ENCODE measurements at regions of chr17 and their contacts with region 1.

Region 1: GRCh38 chr17:74859459-74860228 is at the start of gene GRIN2C:
- DNase-seq: no peak
- H3K4me3 ChIP-seq: peak within 1 kb of the TSS in 3 of 4 donors; percentile 22 to 35 (median 31)
- H3K27ac ChIP-seq: no peak within 1 kb of the TSS
- H3K4me1 ChIP-seq: peaks cover 0 to 31% (median 27%) of the 10 kb centered on the region in 4 donors
- H3K27me3 ChIP-seq: peaks cover 37 to 82% (median 65%) of the 10 kb centered on the region in 3 donors
- CTCF ChIP-seq: peak in 2 of 4 experiments; percentile 11 to 16
- EP300 ChIP-seq: no peak
- POLR2A ChIP-seq: no peak
- total RNA-seq, gene GRIN2C: 0.49 TPM in 1 of 4 donors, not detected in the others

Region 2: DNA sequence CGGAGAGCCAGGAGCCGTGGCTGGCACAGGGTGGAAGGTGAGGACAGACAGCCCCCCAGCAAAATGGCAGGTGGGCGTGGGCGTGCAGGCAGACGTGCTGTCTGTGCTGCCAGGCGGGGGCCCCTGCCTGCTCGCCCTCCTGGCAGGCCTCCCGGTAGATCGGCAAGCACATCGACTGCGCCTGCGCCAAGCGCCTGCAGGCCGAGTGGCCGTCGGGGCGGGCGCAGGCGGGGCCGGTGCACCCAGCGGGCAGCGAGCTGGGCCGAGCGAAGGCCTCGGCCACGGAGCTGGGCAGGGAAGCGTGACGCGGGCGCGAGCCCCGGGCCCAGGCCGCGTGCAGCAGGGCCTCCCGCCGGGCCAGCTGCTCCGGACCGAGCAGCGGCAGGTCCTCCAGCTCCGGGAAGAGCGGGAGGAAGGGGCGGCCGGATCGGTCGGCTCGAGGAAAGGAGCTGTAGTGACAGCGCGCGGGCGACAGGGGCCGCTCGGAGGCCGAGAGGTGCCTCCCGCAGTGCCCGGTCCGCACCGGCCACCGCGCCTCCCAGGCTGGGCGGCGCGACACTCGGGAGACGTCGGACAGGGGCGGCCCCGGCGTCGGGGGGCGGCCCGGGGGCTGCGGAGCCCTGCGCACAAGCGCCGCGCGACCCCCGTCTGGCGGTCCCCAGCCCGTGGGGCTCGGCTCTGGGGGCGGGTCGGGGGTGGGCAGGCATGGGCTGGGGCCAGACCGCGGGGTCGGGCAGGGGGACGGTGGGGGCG is 16.9 kb before region 1 on chr17:
- intact Hi-C with region 1: loop called (anchors 1 kb)
- DNase-seq: no peak
- H3K4me3 ChIP-seq: peak overlapping the region in 3 of 4 donors; percentile 43 to 46 (median 45)
- H3K27ac ChIP-seq: peak overlapping the region in 2 of 4 donors; percentile 42 to 67
- H3K4me1 ChIP-seq: peaks cover 0 to 34% (median 31%) of the 10 kb centered on the region in 4 donors
- H3K27me3 ChIP-seq: peaks cover 0 to 8% (median 0%) of the 10 kb centered on the region in 3 donors
- CTCF ChIP-seq: peak in 3 of 4 experiments; percentile 12 to 58 (median 37)
- EP300 ChIP-seq: no peak
- POLR2A ChIP-seq: no peak